Endothelial cell of umbilical vein (primary cell): ENCODE measurements at regions of chr15 and their contacts with region 1.

Region 1: DNA sequence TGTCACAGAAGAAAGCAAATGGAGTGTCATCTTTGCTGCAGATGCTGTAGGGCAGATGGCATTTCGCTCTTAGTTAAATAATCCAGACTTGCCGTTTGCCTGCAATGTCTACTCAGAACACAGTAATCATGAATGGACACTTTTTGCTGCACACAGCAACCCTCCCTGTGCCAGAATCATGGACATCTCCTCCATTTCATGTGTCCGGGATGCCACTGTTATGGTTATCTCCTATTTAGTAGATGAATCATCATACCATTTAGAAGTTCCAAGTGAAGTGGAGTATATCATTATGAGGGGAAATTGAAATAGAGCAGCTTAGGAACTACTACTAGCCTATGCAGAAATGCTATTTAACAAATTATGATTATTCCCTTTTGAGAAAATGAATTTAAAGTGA is 118.5 kb downstream of the DUT start:
- DNase-seq: no peak
- H3K4me3 ChIP-seq: no peak overlapping the region
- H3K27ac ChIP-seq: no peak overlapping the region
- H3K4me1 ChIP-seq: peaks cover 38% of the 10 kb centered on the region
- H3K27me3 ChIP-seq: no peaks in the 10 kb centered on the region
- CTCF ChIP-seq: no peak
- POLR2A ChIP-seq: no peak

Region 2: GRCh38 chr15:48392356-48392755 is 57.4 kb before region 1 on chr15:
- CTCF ChIA-PET with region 1: interaction called, 3 read pairs
- POLR2A ChIA-PET with region 1: no interaction called
- dilution Hi-C with region 1: no loop called
- intact Hi-C with region 1: loop called (anchors 1 kb)
- DNase-seq: peak; percentile 99
- H3K4me3 ChIP-seq: no peak overlapping the region
- H3K27ac ChIP-seq: peak overlapping the region; percentile 78
- H3K4me1 ChIP-seq: peaks cover 36% of the 10 kb centered on the region
- H3K27me3 ChIP-seq: no peaks in the 10 kb centered on the region
- CTCF ChIP-seq: no peak
- POLR2A ChIP-seq: no peak

Region 3: GRCh38 chr15:48602358-48603122 is 152.8 kb after region 1 on chr15:
- CTCF ChIA-PET with region 1: no interaction called
- POLR2A ChIA-PET with region 1: no interaction called
- dilution Hi-C with region 1: no loop called
- intact Hi-C with region 1: loop called (anchors 5 kb)
- DNase-seq: peak; percentile 91
- H3K4me3 ChIP-seq: peak overlapping the region in 1 of 3 experiments; percentile 13
- H3K27ac ChIP-seq: peak overlapping the region; percentile 71
- H3K4me1 ChIP-seq: peaks cover 26% of the 10 kb centered on the region
- H3K27me3 ChIP-seq: no peaks in the 10 kb centered on the region
- CTCF ChIP-seq: no peak
- POLR2A ChIP-seq: no peak